AG04450 (cell line): ENCODE measurements at regions of chr9 and their contacts with region 1.

Region 1: DNA sequence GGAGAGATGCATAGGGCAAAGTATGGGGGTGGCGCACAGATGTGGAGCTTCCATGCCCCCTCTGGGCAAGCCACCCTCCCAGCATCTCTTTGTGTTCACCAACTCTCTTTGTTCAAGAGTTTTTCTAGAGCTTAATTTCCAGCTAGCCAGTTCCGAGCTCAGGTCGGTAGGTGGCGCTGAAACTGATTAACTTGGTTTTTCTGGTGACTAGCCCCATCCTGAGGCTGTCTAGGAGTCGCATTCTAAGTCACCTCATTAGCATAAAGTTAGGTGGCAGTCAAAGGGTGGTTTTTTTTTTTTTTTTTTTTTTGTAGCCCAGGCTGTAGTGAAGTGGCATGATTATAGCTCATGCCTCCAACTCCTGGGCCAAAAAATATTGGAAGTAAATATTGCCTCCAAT is 476.4 kb downstream of the KDM4C start:
- DNase-seq: no peak
- H3K4me3 ChIP-seq: no peak overlapping the region
- H3K27ac ChIP-seq: no peak overlapping the region
- H3K27me3 ChIP-seq: no peaks in the 10 kb centered on the region
- CTCF ChIP-seq: peak; percentile 65

Region 2: GRCh38 chr9:7176561-7176960 is 57.6 kb before region 1 on chr9:
- CTCF ChIA-PET with region 1: interaction called, 10 read pairs
- POLR2A ChIA-PET with region 1: no interaction called
- DNase-seq: no peak
- H3K4me3 ChIP-seq: no peak overlapping the region
- H3K27ac ChIP-seq: no peak overlapping the region
- H3K27me3 ChIP-seq: no peaks in the 10 kb centered on the region
- CTCF ChIP-seq: no peak

Region 3: DNA sequence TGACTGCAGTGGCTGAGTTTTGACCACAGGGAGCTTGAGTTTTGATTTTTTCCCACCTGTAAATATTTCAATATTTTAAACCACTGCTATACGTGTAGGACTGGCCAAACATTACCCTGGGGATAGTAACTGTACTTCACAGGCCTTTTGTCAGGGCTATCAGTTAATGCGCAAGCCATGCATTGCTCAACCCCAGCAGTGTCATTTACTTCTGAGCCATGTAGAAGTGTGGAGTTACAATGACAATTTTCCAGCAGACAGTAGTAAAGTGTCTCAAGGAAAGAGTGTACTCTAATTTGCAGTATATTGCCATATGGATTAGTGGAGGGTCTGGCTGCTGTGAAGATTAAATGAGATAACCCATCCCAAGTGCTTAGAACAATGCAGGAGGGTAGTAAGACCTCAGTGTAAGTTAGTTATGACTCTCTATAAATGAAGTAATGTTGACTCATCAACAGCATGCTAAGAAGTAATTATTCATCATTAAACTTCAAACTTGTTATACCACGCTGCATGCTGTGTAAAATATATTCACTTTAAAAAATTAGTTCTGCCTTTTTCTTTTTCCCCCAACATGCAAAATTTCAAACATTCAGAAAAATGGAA is 12.9 kb after region 1 on chr9:
- CTCF ChIA-PET with region 1: interaction called, 13 read pairs
- POLR2A ChIA-PET with region 1: no interaction called
- DNase-seq: no peak
- H3K4me3 ChIP-seq: no peak overlapping the region
- H3K27ac ChIP-seq: no peak overlapping the region
- H3K27me3 ChIP-seq: no peaks in the 10 kb centered on the region
- CTCF ChIP-seq: no peak

Region 4: GRCh38 chr9:7368410-7369292 is 134.5 kb after region 1 on chr9:
- CTCF ChIA-PET with region 1: no interaction called
- POLR2A ChIA-PET with region 1: no interaction called
- DNase-seq: peak; percentile 87
- H3K4me3 ChIP-seq: no peak overlapping the region
- H3K27ac ChIP-seq: peak overlapping the region; percentile 90
- H3K27me3 ChIP-seq: no peaks in the 10 kb centered on the region
- CTCF ChIP-seq: no peak